ENCODE measurements at regions of chr9 and their contacts with region 1.

Region 1: DNA sequence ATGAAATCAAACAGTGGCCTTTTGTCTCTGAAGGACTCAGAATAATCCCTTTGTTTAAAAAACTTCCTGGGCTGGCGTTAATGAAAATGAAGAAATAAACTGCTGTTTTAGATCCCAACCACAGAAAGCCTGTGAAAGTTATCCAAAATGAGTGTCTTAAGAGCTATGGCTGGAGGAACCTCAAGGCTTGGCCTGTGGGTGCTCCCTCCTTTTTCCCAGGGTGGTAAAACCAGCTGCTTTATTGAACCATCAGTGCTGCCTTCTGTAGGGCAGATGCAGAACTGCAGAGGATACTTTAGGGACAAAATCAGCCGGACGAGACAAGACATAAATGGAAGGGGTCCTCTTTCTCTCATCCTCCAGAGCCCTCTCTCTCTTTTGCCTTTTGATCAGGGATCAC is 100.9 kb downstream of the SMARCA2 start:
- DNase-seq: no peak
- ATAC-seq: no peak
- H3K4me3 ChIP-seq: no peak overlapping the region
- H3K27ac ChIP-seq: no peak overlapping the region
- H3K4me1 ChIP-seq: no peaks in the 10 kb centered on the region
- H3K27me3 ChIP-seq: no peaks in the 10 kb centered on the region

Region 2: DNA sequence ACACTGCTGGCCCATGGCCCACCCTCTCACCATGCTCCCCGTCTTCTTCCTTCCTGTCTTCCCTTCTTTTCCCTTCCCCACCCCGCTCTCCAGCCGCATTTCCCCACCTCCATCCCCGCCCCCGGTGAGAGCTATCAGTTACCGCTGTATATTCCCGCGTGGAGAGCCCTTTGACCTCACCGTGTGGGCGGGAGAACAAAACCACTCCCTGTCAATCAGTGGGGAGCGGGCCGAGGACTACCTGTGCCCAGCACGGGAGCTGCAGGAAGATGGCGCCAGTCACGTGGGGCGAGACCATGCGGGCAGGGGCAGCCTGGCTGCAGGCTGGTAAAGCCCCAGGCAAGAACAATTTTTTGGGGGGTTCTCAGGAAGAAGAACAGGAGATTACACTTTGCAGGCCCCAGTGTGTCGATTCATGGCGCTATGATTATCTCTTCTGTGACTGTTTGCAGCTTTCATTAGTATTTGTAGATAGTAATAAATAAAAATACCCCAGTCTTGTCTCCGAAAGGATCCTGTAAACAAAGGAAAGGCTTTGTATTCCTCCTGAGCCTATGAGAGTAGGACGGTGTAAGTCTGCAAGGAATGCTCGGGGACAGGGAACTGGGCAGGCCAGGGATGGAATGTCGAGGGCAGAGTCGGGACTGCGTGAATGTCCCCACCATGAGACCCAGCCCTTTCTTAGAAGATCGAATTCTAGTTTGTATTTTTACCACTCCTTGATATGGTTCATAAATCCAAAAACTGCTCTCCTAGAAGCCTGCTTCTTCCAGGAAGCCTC is 1289.4 kb before region 1 on chr9:
- intact Hi-C with region 1: no loop called
- DNase-seq: no peak
- ATAC-seq: no peak
- H3K4me3 ChIP-seq: no peak overlapping the region
- H3K27ac ChIP-seq: no peak overlapping the region
- H3K4me1 ChIP-seq: no peaks in the 10 kb centered on the region
- H3K27me3 ChIP-seq: no peaks in the 10 kb centered on the region

Region 3: DNA sequence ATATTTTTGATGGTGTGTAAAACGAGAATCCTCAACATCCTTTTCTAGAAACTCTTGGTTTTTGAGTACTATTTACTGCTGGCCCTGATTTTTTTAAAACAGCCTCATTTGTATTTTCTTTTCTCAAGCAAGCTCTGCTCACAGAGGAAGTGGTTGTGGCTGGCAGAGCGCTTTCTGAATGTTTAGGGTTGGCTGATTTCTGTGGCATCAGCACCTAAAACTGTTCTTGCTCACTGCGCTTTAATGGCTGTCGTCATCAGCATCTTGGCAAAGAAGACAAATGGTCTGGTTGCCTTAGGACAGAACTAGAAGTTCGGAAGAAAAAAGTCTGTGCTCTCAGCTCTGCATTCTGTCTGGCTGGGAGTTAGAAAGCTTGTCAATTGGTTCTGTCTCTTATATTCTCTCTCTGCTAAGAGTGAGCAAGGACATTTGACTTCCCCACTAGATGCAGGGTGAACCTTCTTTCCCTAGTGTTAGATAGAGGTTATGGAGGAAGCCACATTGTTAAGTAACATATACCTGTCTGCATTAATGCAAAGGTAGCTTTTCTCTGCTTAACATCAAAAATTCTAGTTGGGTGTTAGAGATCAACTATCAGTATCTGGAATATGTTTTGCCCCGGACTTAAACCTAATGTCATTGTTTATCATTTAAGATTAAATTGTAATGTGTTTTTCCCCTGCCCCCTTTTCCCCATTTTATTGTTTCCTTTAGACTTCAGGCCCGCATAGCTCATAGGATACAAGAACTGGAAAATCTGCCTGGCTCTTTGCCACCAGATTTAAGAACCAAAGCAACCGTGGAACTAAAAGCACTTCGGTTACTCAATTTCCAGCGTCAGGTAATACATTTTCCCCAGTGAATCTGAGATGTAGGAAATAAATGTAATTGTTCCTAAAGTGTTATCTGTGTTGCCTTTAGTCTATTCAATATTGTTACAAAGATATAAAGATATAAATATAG is 61.9 kb before region 1 on chr9:
- intact Hi-C with region 1: no loop called
- DNase-seq: peak in 1 of 3 donors; percentile 21
- ATAC-seq: peak in 1 of 2 donors; percentile 62
- H3K4me3 ChIP-seq: no peak overlapping the region
- H3K27ac ChIP-seq: peak overlapping the region; percentile 16
- H3K4me1 ChIP-seq: peaks cover 3% of the 10 kb centered on the region
- H3K27me3 ChIP-seq: no peaks in the 10 kb centered on the region

Region 4: DNA sequence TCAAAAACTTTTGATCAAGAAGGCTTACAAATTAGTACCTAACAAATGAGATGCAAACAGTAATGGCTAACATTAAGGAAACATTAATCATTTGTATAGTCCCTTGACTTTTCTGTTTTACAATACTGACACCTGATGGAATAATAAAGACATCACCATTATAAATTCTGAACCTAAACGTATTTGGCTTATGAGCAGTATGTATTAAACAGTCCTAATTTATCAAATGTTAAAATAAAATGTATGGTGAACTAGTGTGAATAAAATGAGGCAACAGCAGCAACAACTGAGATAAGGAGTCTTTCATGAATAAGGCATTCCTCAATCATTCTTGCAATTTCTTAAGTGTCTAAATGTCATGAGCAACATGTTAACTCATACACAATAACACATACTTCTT is 721.8 kb after region 1 on chr9:
- intact Hi-C with region 1: loop called in 1 of 4 experiments (anchors 10 kb)
- DNase-seq: no peak
- ATAC-seq: peak in 1 of 2 donors; percentile 70
- H3K4me3 ChIP-seq: peak overlapping the region; percentile 44
- H3K27ac ChIP-seq: no peak overlapping the region
- H3K4me1 ChIP-seq: peaks cover 2% of the 10 kb centered on the region
- H3K27me3 ChIP-seq: no peaks in the 10 kb centered on the region

Measured in right cardiac atrium (tissue), 5 donors.